CD4-positive, alpha-beta memory T cell (primary cell): ENCODE measurements at regions of chr10 and their contacts with region 1.

Region 1: GRCh38 chr10:132307823-132308587 is at the start of gene STK32C:
- DNase-seq: peak; percentile 85 to 89 (median 88)
- H3K4me3 ChIP-seq: peak within 1 kb of the TSS; percentile 6 to 60
- H3K4me3 Mint-ChIP-seq: peak within 1 kb of the TSS; percentile 80 to 91 (median 86)
- H3K27ac ChIP-seq: no peak within 1 kb of the TSS
- H3K27ac Mint-ChIP-seq: peak within 1 kb of the TSS in 5 of 7 donors; percentile 62 to 79 (median 75)
- H3K4me1 ChIP-seq: peaks cover 15% of the 10 kb centered on the region
- H3K4me1 Mint-ChIP-seq: peaks cover 2 to 8% (median 6%) of the 10 kb centered on the region in 4 donors
- H3K27me3 ChIP-seq: no peaks in the 10 kb centered on the region
- H3K27me3 Mint-ChIP-seq: peaks cover 1 to 3% of the 10 kb centered on the region in 2 donors
- total RNA-seq, gene STK32C: 12.8 to 14.7 TPM

Region 2: GRCh38 chr10:131402771-131403650 is 905.0 kb before region 1 on chr10:
- CTCF ChIA-PET with region 1: no interaction called
- POLR2A ChIA-PET with region 1: no interaction called
- intact Hi-C with region 1: no loop called
- DNase-seq: no peak
- H3K4me3 ChIP-seq: no peak overlapping the region
- H3K4me3 Mint-ChIP-seq: no peak overlapping the region
- H3K27ac ChIP-seq: no peak overlapping the region
- H3K27ac Mint-ChIP-seq: no peak overlapping the region
- H3K4me1 ChIP-seq: no peaks in the 10 kb centered on the region
- H3K4me1 Mint-ChIP-seq: no peaks in the 10 kb centered on the region
- H3K27me3 ChIP-seq: no peaks in the 10 kb centered on the region
- H3K27me3 Mint-ChIP-seq: no peaks in the 10 kb centered on the region

Region 3: DNA sequence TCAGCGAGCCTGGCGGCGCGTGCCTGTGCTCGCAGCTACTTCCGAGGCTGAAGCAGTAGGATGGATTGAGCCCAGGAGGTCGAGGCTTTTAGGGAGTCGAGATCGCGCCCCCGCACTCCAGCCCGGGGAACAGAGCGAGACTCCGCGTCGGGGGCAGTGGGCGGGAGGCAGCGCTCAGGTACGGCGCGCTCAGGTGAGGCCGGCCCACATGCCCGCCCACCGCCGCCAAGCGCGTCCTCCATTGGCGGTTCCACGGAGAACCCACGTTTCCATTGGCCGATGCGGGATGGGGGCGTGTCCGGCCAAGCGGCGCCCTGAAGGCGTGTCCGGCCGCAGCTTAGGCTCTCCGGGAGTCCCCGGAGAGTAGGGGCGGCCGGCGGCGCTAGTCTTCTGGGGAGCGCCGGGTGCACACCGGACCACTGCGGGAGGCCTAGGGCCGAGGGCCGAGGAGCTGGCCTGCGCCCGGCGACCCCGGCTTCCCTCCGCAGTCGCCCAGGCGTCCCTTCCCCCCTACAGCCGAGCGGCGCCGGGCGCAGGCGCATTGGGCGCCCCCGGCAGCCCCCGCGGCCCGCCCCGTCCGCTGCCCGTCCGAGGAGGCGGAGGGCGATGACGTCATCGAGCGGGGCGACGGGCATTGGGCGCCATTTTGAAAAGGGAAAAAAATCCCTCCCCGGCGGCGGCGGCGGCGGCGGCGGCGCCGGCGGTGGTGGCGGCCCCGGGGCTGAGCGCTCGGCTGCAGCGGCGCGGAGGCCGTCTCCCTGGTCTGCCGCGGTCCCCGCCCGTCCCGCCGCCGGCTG is 407.5 kb before region 1 on chr10 and contains the start of gene PPP2R2D:
- CTCF ChIA-PET with region 1: no interaction called
- POLR2A ChIA-PET with region 1: no interaction called
- intact Hi-C with region 1: loop called (anchors 2 kb)
- DNase-seq: peak; percentile 96 to 98 (median 97)
- H3K4me3 ChIP-seq: peak within 1 kb of the TSS; percentile 63 to 80
- H3K4me3 Mint-ChIP-seq: peak within 1 kb of the TSS; percentile 87 to 94 (median 89)
- H3K27ac ChIP-seq: peak within 1 kb of the TSS; percentile 75
- H3K27ac Mint-ChIP-seq: peak within 1 kb of the TSS; percentile 90 to 98 (median 95)
- H3K4me1 ChIP-seq: peaks cover 69% of the 10 kb centered on the region
- H3K4me1 Mint-ChIP-seq: peaks cover 35 to 72% (median 51%) of the 10 kb centered on the region in 4 donors
- H3K27me3 ChIP-seq: no peaks in the 10 kb centered on the region
- H3K27me3 Mint-ChIP-seq: peaks cover 0 to 2% of the 10 kb centered on the region in 2 donors
- total RNA-seq, gene PPP2R2D: 47.2 to 49.2 TPM

Region 4: DNA sequence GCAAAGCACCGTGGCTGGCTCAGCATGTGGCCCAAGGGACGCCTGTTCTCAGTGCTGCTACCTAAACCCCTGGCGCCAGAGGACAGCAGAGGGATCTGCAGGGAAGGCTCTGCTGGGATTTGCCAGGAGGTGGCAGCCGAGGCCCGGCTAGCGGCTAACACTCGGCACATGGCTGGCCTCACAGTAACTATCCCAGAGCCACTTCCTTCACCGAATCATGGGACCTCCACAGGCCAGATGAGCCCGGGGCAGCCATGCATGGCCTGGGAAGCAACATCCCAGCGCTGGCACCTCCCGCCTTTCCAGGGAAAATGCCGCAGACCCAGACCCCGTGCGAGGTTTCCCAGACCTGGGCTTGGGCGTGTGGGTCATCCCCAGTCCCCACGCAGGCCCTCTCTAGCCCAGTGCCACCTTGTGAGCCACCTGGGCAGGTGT is 84.8 kb before region 1 on chr10:
- CTCF ChIA-PET with region 1: no interaction called
- POLR2A ChIA-PET with region 1: no interaction called
- intact Hi-C with region 1: loop called (anchors 2 kb)
- DNase-seq: peak in 4 of 5 donors; percentile 41 to 58 (median 52)
- H3K4me3 ChIP-seq: no peak overlapping the region
- H3K4me3 Mint-ChIP-seq: no peak overlapping the region
- H3K27ac ChIP-seq: no peak overlapping the region
- H3K27ac Mint-ChIP-seq: no peak overlapping the region
- H3K4me1 ChIP-seq: no peaks in the 10 kb centered on the region
- H3K4me1 Mint-ChIP-seq: peaks cover 0 to 6% (median 2%) of the 10 kb centered on the region in 4 donors
- H3K27me3 ChIP-seq: no peaks in the 10 kb centered on the region
- H3K27me3 Mint-ChIP-seq: no peaks in the 10 kb centered on the region

Region 5: GRCh38 chr10:132331526-132332432 is 23.8 kb after region 1 on chr10 and contains the start of gene LRRC27:
- CTCF ChIA-PET with region 1: no interaction called
- POLR2A ChIA-PET with region 1: interaction called, 4 read pairs
- intact Hi-C with region 1: loop called (anchors 1 kb)
- DNase-seq: peak; percentile 98 to 100 (median 100)
- H3K4me3 ChIP-seq: peak within 1 kb of the TSS; percentile 79 to 95
- H3K4me3 Mint-ChIP-seq: peak within 1 kb of the TSS; percentile 85 to 94 (median 90)
- H3K27ac ChIP-seq: peak within 1 kb of the TSS; percentile 77
- H3K27ac Mint-ChIP-seq: peak within 1 kb of the TSS; percentile 80 to 97 (median 95)
- H3K4me1 ChIP-seq: peaks cover 39% of the 10 kb centered on the region
- H3K4me1 Mint-ChIP-seq: peaks cover 27 to 75% (median 48%) of the 10 kb centered on the region in 4 donors
- H3K27me3 ChIP-seq: no peaks in the 10 kb centered on the region
- H3K27me3 Mint-ChIP-seq: peaks cover 0 to 1% of the 10 kb centered on the region in 2 donors
- total RNA-seq, gene LRRC27: 3.7 to 3.8 TPM

Region 6: DNA sequence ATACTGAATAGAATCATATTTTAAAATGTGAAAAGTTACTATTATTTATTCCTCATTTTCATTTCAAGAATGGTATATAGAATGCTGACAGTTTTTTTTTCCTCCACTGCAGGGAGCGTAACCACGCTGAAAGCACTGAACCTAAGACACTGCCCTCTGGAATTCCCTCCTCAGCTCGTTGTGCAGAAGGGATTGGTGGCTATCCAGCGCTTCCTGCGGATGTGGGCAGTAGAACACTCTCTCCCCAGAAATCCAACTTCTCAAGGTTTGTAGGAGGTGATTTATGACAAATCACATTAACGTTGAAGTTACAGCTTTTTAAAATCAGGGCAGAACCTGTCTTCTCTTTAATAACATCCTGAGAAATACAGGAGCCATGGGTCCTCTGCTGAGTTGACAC is 36.4 kb after region 1 on chr10:
- CTCF ChIA-PET with region 1: no interaction called
- POLR2A ChIA-PET with region 1: no interaction called
- intact Hi-C with region 1: no loop called
- DNase-seq: no peak
- H3K4me3 ChIP-seq: no peak overlapping the region
- H3K4me3 Mint-ChIP-seq: no peak overlapping the region
- H3K27ac ChIP-seq: no peak overlapping the region
- H3K27ac Mint-ChIP-seq: no peak overlapping the region
- H3K4me1 ChIP-seq: no peaks in the 10 kb centered on the region
- H3K4me1 Mint-ChIP-seq: no peaks in the 10 kb centered on the region
- H3K27me3 ChIP-seq: no peaks in the 10 kb centered on the region
- H3K27me3 Mint-ChIP-seq: no peaks in the 10 kb centered on the region

Region 7: DNA sequence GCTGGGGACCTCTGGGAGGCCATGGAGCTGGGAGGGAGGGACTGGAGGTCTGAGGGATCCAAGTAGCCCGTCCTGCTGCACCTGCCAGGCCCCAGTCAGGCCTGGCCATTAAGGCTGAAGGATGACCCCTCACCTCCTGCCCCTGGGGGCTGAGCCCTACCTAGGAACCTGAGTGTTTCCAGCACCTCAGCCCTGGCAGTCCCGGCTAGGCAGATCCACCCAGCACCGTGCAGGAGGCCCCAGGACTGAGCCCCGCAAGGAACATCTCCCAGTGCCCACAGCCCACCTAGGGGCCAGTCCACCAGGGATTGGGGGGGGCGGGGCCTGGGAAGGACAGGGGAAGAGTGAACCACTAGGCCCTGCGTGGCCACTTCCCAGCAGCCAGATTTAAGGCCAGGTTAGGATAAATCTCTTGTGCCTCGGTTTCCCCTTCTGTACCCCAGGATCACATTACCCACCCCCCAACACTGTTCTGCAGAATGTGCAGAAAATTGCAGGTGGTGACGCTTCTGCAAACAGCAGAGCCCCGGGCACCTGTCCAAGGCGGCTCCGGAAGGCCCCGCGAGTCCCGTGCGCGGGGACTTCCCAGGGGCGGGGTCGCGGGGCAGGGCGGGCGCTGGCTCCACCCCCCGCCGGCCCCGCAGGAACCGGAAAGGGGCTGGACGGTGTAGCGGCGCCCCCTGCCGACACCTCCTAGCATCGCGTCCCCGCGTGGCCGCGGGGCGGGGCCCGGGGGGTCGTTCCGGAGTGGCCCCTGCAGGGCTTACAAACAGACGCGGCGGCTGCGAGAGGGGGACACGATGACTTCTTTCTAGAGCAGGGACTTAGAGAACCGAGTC is 144.8 kb after region 1 on chr10:
- CTCF ChIA-PET with region 1: no interaction called
- POLR2A ChIA-PET with region 1: no interaction called
- intact Hi-C with region 1: loop called (anchors 2 kb)
- DNase-seq: peak; percentile 91 to 92 (median 91)
- H3K4me3 ChIP-seq: peak overlapping the region in 1 of 2 donors; percentile 32
- H3K4me3 Mint-ChIP-seq: peak overlapping the region in 6 of 8 donors; percentile 45 to 79 (median 56)
- H3K27ac ChIP-seq: peak overlapping the region; percentile 86
- H3K27ac Mint-ChIP-seq: peak overlapping the region; percentile 83 to 98 (median 95)
- H3K4me1 ChIP-seq: peaks cover 31% of the 10 kb centered on the region
- H3K4me1 Mint-ChIP-seq: peaks cover 6 to 37% (median 15%) of the 10 kb centered on the region in 4 donors
- H3K27me3 ChIP-seq: no peaks in the 10 kb centered on the region
- H3K27me3 Mint-ChIP-seq: no peaks in the 10 kb centered on the region

Region 8: GRCh38 chr10:132526676-132527075 is 218.7 kb after region 1 on chr10:
- CTCF ChIA-PET with region 1: no interaction called
- POLR2A ChIA-PET with region 1: no interaction called
- intact Hi-C with region 1: no loop called
- DNase-seq: no peak
- H3K4me3 ChIP-seq: no peak overlapping the region
- H3K4me3 Mint-ChIP-seq: no peak overlapping the region
- H3K27ac ChIP-seq: no peak overlapping the region
- H3K27ac Mint-ChIP-seq: no peak overlapping the region
- H3K4me1 ChIP-seq: no peaks in the 10 kb centered on the region
- H3K4me1 Mint-ChIP-seq: no peaks in the 10 kb centered on the region
- H3K27me3 ChIP-seq: no peaks in the 10 kb centered on the region
- H3K27me3 Mint-ChIP-seq: peaks cover 7 to 15% of the 10 kb centered on the region in 2 donors